ENCODE measurements at regions of chr17 and their contacts with region 1.

Region 1: DNA sequence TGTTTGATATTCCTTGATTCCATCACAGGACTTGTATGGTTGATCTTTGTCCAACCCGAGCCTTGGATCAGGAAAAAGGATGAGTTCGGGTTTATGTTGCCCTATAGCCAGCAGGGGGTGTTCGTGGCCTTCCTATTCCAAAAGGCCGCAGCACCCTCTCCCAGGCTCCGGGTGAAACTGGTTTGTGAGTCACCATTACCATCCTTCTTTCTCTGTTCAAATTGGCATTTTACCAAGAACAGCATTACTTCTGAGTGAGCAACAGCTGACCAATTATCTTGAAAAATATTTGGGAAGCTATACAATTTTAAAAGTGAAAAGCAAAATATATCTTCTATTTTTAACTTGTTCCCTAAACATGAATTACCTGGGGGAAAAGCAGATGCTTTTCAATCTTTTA is 24.3 kb upstream of the KRT20 start:
- DNase-seq: peak; percentile 29 to 70 (median 56)
- ATAC-seq: peak; percentile 93
- H3K4me3 ChIP-seq: no peak overlapping the region
- H3K4me3 Mint-ChIP-seq: no peak overlapping the region
- H3K27ac ChIP-seq: no peak overlapping the region
- H3K27ac Mint-ChIP-seq: no peak overlapping the region
- H3K4me1 ChIP-seq: no peaks in the 10 kb centered on the region
- H3K4me1 Mint-ChIP-seq: no peaks in the 10 kb centered on the region
- H3K27me3 ChIP-seq: peaks cover 5 to 7% of the 10 kb centered on the region in 2 donors
- H3K27me3 Mint-ChIP-seq: peaks cover 26 to 45% (median 36%) of the 10 kb centered on the region in 5 donors

Region 2: DNA sequence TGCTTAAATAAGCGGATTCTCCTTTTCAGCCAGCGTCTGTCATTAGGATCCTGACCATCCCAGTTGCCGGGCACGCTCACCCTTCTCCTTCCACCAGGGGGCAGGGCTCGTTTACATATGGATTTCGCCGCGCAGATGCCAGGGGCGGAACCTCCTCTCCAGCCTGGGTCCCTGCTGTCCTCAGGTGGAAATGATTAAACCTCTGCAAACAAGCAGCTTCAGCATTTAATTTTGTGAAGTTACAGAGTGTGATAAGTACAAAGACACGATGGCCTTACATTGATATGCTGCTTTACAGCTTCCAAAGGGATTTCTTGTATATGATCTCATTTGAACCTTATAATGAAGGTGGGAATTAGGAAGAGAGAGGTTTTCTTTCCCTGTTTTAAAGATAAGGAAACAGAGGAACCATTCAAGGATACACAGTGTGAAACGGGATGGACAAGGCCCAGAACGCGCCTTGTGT is 105.7 kb before region 1 on chr17:
- CTCF ChIA-PET with region 1: no interaction called
- POLR2A ChIA-PET with region 1: no interaction called
- intact Hi-C with region 1: loop called in 1 of 2 experiments (anchors 1 kb)
- DNase-seq: peak; percentile 34 to 74 (median 54)
- ATAC-seq: peak; percentile 90
- H3K4me3 ChIP-seq: no peak overlapping the region
- H3K4me3 Mint-ChIP-seq: peak overlapping the region in 1 of 10 donors; percentile 33
- H3K27ac ChIP-seq: no peak overlapping the region
- H3K27ac Mint-ChIP-seq: no peak overlapping the region
- H3K4me1 ChIP-seq: no peaks in the 10 kb centered on the region
- H3K4me1 Mint-ChIP-seq: peaks cover 0 to 4% (median 3%) of the 10 kb centered on the region in 7 donors
- H3K27me3 ChIP-seq: peaks cover 0 to 4% of the 10 kb centered on the region in 2 donors
- H3K27me3 Mint-ChIP-seq: peaks cover 33 to 51% (median 48%) of the 10 kb centered on the region in 5 donors

Region 3: GRCh38 chr17:40854159-40854814 is 55.1 kb before region 1 on chr17:
- CTCF ChIA-PET with region 1: no interaction called
- POLR2A ChIA-PET with region 1: no interaction called
- intact Hi-C with region 1: loop called in 1 of 2 experiments (anchors 1 kb)
- DNase-seq: no peak
- ATAC-seq: no peak
- H3K4me3 ChIP-seq: no peak overlapping the region
- H3K4me3 Mint-ChIP-seq: no peak overlapping the region
- H3K27ac ChIP-seq: no peak overlapping the region
- H3K27ac Mint-ChIP-seq: no peak overlapping the region
- H3K4me1 ChIP-seq: no peaks in the 10 kb centered on the region
- H3K4me1 Mint-ChIP-seq: peaks cover 0 to 6% (median 0%) of the 10 kb centered on the region in 7 donors
- H3K27me3 ChIP-seq: no peaks in the 10 kb centered on the region
- H3K27me3 Mint-ChIP-seq: peaks cover 19 to 53% (median 27%) of the 10 kb centered on the region in 5 donors

Region 4: GRCh38 chr17:41496820-41497408 is 587.6 kb after region 1 on chr17:
- CTCF ChIA-PET with region 1: interaction called, 3 read pairs
- POLR2A ChIA-PET with region 1: no interaction called
- intact Hi-C with region 1: loop called (anchors 1 kb)
- DNase-seq: peak; percentile 19 to 61 (median 48)
- ATAC-seq: peak; percentile 88
- H3K4me3 ChIP-seq: no peak overlapping the region
- H3K4me3 Mint-ChIP-seq: peak overlapping the region in 3 of 10 donors; percentile 30 to 59 (median 52)
- H3K27ac ChIP-seq: no peak overlapping the region
- H3K27ac Mint-ChIP-seq: peak overlapping the region in 4 of 9 donors; percentile 38 to 72 (median 57)
- H3K4me1 ChIP-seq: peaks cover 0 to 9% of the 10 kb centered on the region in 2 donors
- H3K4me1 Mint-ChIP-seq: peaks cover 21 to 29% (median 23%) of the 10 kb centered on the region in 7 donors
- H3K27me3 ChIP-seq: no peaks in the 10 kb centered on the region
- H3K27me3 Mint-ChIP-seq: peaks cover 0 to 8% (median 0%) of the 10 kb centered on the region in 5 donors

Region 5: DNA sequence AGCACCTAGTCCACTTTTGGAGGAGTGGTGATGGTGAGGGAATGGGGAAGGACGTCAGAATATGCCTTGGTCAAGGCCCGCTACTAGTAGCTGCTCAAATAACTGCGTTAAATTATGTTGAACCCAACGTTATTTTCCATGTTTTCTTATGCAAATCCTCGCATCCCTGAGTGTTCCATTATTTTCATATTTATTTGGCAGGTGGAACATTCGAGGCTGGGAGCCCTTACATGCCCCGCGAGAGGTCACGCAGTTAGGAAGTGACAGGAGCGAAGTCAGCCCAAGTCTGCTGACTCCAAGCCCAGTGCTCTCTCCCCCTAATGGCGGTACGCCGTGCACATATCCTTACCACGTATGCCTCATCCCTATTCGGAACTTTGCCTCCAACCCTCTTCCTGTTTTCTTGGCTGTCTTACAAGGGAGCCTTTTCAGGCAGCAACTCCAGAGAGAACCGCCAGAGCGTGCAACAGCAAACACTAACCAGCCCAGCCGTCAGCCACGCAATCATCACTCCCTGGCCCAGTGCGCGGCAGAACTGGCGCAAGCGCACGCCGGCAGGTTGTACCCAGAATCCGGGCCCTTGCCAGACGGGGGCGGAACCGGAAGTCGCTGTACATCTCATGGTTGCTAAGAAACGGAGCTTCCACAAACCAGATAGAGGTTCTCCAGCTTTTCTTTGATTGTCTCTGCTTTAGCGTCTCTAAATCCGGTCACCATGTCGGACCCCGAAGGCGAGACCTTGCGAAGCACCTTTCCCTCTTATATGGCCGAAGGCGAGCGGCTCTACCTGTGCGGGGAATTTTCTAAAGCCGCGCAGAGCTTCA is 1020.9 kb after region 1 on chr17 and contains the start of gene ODAD4:
- CTCF ChIA-PET with region 1: no interaction called
- POLR2A ChIA-PET with region 1: interaction called, 11 read pairs
- intact Hi-C with region 1: no loop called
- DNase-seq: peak; percentile 87 to 98 (median 97)
- ATAC-seq: peak; percentile 98
- H3K4me3 ChIP-seq: peak within 1 kb of the TSS; percentile 79
- H3K4me3 Mint-ChIP-seq: peak within 1 kb of the TSS; percentile 93 to 100 (median 96)
- H3K27ac ChIP-seq: peak within 1 kb of the TSS; percentile 84
- H3K27ac Mint-ChIP-seq: peak within 1 kb of the TSS; percentile 90 to 100 (median 96)
- H3K4me1 ChIP-seq: peaks cover 9 to 11% of the 10 kb centered on the region in 2 donors
- H3K4me1 Mint-ChIP-seq: peaks cover 18 to 52% (median 24%) of the 10 kb centered on the region in 7 donors
- H3K27me3 ChIP-seq: no peaks in the 10 kb centered on the region
- H3K27me3 Mint-ChIP-seq: no peaks in the 10 kb centered on the region
- total RNA-seq, gene ODAD4: 0.16 to 4.1 (median 1.6) TPM in 4 of 5 experiments, not detected in the other